Kidney (tissue), 22 donors: ENCODE measurements at regions of chr1 and their contacts with region 1.

Region 1: DNA sequence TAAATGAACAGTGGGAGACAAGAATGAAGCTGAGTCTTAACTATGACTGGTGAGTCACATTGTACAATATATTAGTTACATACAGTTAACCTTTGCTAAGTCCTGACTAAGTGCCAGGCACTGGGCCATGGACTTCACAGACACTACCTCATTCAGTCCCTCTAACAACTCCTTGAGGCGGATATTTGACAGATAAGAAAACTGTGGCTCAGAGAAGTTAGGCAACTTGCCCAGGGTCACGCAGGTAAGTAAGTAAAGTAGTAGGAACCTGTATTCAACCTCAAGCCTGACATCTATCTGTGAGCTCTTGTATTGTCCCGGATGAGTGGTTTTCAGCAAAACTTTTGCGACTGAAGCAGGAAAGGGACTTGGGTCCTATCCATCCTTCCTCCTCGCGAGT is 62.1 kb downstream of the GNG12 start:
- DNase-seq: no peak
- H3K4me3 ChIP-seq: no peak overlapping the region
- H3K27ac ChIP-seq: peak overlapping the region in 1 of 2 donors; percentile 47
- H3K4me1 ChIP-seq: peaks cover 0 to 16% (median 14%) of the 10 kb centered on the region in 3 donors
- H3K27me3 ChIP-seq: no peaks in the 10 kb centered on the region
- CTCF ChIP-seq: no peak

Region 2: GRCh38 chr1:67832737-67833601 is 61.8 kb after region 1 on chr1 and contains the start of gene GNG12:
- intact Hi-C with region 1: loop called (anchors 10 kb)
- DNase-seq: peak; percentile 79 to 92 (median 87)
- H3K4me3 ChIP-seq: peak within 1 kb of the TSS; percentile 89 to 92 (median 92)
- H3K27ac ChIP-seq: peak within 1 kb of the TSS; percentile 90 to 92
- H3K4me1 ChIP-seq: peaks cover 3 to 11% (median 4%) of the 10 kb centered on the region in 3 donors
- H3K27me3 ChIP-seq: no peaks in the 10 kb centered on the region
- CTCF ChIP-seq: no peak
- total RNA-seq, gene GNG12: 89.3 TPM